ENCODE measurements at regions of chr1 and their contacts with region 1.

Region 1: DNA sequence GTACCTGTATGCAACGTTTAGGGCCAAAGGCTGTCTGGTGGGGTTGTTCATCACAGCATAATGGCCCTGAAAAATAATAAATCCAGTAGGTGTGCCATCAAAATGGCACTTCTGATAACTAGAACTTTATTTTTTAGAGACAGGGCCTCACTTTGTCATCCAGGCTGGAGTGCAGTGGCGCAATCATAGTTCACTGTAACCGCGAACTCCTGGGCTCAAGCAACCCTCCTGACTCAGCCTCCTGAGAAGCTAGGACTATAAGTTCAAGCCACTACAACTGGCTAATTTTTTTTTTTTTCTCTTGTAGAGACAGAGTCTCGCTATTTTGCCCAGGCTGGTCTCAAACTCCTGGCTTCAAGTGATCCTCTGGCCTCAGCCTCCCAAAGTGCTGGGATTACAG is 4.7 kb downstream of the SNAPIN start:
- DNase-seq: no peak
- H3K4me3 ChIP-seq: no peak overlapping the region
- H3K27ac ChIP-seq: no peak overlapping the region
- H3K4me1 ChIP-seq: peaks cover 0 to 4% of the 10 kb centered on the region in 2 donors
- H3K27me3 ChIP-seq: no peaks in the 10 kb centered on the region
- CTCF ChIP-seq: no peak
- POLR2A ChIP-seq: no peak

Region 2: GRCh38 chr1:153602749-153603148 is 60.5 kb before region 1 on chr1:
- intact Hi-C with region 1: loop called (anchors 2 kb)
- DNase-seq: no peak
- H3K4me3 ChIP-seq: no peak overlapping the region
- H3K27ac ChIP-seq: no peak overlapping the region
- H3K4me1 ChIP-seq: peaks cover 0 to 5% of the 10 kb centered on the region in 2 donors
- H3K27me3 ChIP-seq: no peaks in the 10 kb centered on the region
- CTCF ChIP-seq: no peak
- POLR2A ChIP-seq: no peak